Panc1 (cell line): ENCODE measurements at regions of chr5 and their contacts with region 1.

Region 1: GRCh38 chr5:34846681-34847455 is 7.9 kb downstream of the TTC23L start:
- DNase-seq: no peak
- ATAC-seq: no peak
- H3K4me3 ChIP-seq: no peak overlapping the region
- H3K27ac ChIP-seq: no peak overlapping the region
- H3K4me1 ChIP-seq: no peaks in the 10 kb centered on the region
- H3K27me3 ChIP-seq: peaks cover 4% of the 10 kb centered on the region
- CTCF ChIP-seq: no peak

Region 2: GRCh38 chr5:34695275-34696027 is 151.4 kb before region 1 on chr5:
- CTCF ChIA-PET with region 1: no interaction called
- POLR2A ChIA-PET with region 1: interaction called, 24 read pairs
- in situ Hi-C with region 1: no loop called
- intact Hi-C with region 1: no loop called
- DNase-seq: no peak
- ATAC-seq: no peak
- H3K4me3 ChIP-seq: no peak overlapping the region
- H3K27ac ChIP-seq: no peak overlapping the region
- H3K4me1 ChIP-seq: no peaks in the 10 kb centered on the region
- H3K27me3 ChIP-seq: no peaks in the 10 kb centered on the region
- CTCF ChIP-seq: no peak

Region 3: GRCh38 chr5:34957857-34958690 is 111.2 kb after region 1 on chr5:
- CTCF ChIA-PET with region 1: no interaction called
- POLR2A ChIA-PET with region 1: no interaction called
- in situ Hi-C with region 1: no loop called
- intact Hi-C with region 1: no loop called
- DNase-seq: peak; percentile 15
- ATAC-seq: peak; percentile 81
- H3K4me3 ChIP-seq: no peak overlapping the region
- H3K27ac ChIP-seq: no peak overlapping the region
- H3K4me1 ChIP-seq: no peaks in the 10 kb centered on the region
- H3K27me3 ChIP-seq: no peaks in the 10 kb centered on the region
- CTCF ChIP-seq: peak; percentile 75